ENCODE measurements at regions of chr14 and their contacts with region 1.

Region 1: DNA sequence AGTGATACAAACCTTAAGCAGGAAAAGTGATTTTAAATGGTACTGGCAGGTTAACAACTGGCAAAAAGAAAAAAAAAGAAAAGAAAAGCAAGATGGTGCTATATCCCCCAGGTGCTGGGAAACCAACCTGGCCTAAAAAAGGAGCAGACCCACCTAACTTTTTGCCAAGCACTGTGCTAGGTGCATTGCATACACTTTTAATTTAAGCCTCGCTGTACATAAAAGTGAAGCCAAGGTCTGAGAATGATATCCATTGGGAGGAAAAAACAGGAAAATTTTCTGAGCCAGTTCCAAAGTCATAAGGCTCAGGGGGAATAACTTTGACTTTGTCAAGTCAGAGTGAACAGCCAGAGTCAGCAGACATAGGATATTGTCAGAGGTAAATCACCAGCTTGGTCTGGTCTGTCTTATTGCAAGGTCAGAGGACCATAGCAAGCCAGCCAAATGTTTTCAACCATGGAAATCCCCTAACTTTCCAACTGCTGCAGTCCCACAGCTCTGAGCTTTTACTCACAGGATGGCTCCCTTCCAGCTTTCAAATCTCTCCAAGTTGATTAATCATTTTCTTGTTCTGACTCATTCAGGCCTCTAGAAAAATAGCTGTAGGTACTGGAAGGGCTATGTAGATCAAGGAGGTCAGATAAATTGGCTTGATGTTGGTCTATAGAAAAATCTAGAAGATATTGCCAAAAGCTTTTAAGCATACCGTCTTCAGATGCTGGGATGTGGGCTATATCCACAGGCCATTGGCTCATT is 412.9 kb downstream of the RAD51B start:
- DNase-seq: peak; percentile 71
- H3K4me3 Mint-ChIP-seq: no peak overlapping the region
- H3K27ac Mint-ChIP-seq: no peak overlapping the region
- H3K4me1 Mint-ChIP-seq: peaks cover 9% of the 10 kb centered on the region
- H3K27me3 Mint-ChIP-seq: no peaks in the 10 kb centered on the region

Region 2: GRCh38 chr14:68084256-68084655 is 148.2 kb before region 1 on chr14:
- intact Hi-C with region 1: loop called (anchors 10 kb)
- DNase-seq: no peak
- H3K4me3 Mint-ChIP-seq: no peak overlapping the region
- H3K27ac Mint-ChIP-seq: no peak overlapping the region
- H3K4me1 Mint-ChIP-seq: peaks cover 7% of the 10 kb centered on the region
- H3K27me3 Mint-ChIP-seq: no peaks in the 10 kb centered on the region

Region 3: GRCh38 chr14:68181519-68182326 is 50.8 kb before region 1 on chr14:
- intact Hi-C with region 1: loop called (anchors 1 kb)
- DNase-seq: no peak
- H3K4me3 Mint-ChIP-seq: no peak overlapping the region
- H3K27ac Mint-ChIP-seq: peak overlapping the region; percentile 15
- H3K4me1 Mint-ChIP-seq: peaks cover 29% of the 10 kb centered on the region
- H3K27me3 Mint-ChIP-seq: peaks cover 3% of the 10 kb centered on the region

Region 4: DNA sequence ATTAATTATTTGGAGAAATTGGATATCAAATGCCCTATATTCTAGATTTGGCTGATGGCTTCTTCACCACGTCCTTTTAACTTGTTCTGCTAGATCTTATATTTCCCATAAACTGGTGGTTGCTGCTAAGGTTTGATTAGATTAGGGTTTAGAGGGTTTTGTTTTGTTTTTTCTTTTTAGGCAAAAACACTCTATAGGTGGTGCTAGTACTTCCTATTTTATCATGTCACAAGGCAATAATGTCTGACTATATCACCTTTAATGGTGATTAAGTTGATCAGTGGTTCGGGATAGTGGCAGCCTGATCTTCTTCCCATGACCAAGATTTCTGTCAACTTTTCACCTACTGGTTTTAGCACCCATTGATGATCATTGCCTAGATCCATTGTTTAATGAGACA is 42.2 kb after region 1 on chr14:
- intact Hi-C with region 1: loop called (anchors 2 kb)
- DNase-seq: no peak
- H3K4me3 Mint-ChIP-seq: no peak overlapping the region
- H3K27ac Mint-ChIP-seq: no peak overlapping the region
- H3K4me1 Mint-ChIP-seq: peaks cover 30% of the 10 kb centered on the region
- H3K27me3 Mint-ChIP-seq: no peaks in the 10 kb centered on the region